BJ (cell line): ENCODE measurements at regions of chr9 and their contacts with region 1.

Region 1: DNA sequence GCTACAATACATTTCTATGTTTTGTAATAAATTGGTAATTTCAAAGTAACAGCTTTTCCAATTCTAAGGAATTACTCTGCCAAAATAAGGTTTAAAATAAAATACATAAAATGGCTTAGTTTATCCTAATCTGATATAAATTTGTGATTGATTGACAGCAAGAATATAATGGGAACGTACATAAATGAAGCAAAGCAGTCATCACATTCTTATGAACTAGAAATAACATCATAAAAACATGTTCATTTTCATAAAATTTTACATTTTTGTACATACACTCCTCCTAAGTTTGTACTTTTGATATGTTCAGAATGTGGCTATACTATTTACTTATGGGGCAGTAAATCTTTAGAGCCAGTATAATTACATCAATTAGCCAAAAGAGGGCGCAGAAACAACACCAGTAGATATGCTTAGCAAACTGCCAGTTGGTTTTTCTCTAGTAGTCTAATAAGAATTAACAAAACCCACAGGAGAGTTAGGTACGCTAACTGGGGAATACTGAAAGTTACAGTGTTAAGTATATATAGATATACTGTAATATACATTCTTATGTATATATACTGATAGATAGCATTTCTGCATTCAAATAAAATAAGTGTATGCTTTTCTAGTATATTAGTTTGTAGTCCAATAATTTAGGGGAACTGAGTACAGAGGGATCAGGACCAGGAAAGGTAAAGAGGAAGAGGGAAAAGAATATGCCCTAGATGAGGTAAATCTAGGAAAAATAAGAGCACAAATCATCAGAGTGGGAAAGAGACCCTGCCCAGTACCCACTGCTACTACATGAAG is 76.8 kb downstream of the ZDHHC21 start:
- DNase-seq: peak; percentile 5
- H3K4me3 ChIP-seq: no peak overlapping the region
- H3K27me3 ChIP-seq: no peaks in the 10 kb centered on the region
- CTCF ChIP-seq: peak; percentile 64

Region 2: GRCh38 chr9:14511452-14511851 is 104.9 kb before region 1 on chr9:
- CTCF ChIA-PET with region 1: no interaction called
- POLR2A ChIA-PET with region 1: no interaction called
- DNase-seq: no peak
- H3K4me3 ChIP-seq: no peak overlapping the region
- H3K27me3 ChIP-seq: no peaks in the 10 kb centered on the region
- CTCF ChIP-seq: no peak

Region 3: DNA sequence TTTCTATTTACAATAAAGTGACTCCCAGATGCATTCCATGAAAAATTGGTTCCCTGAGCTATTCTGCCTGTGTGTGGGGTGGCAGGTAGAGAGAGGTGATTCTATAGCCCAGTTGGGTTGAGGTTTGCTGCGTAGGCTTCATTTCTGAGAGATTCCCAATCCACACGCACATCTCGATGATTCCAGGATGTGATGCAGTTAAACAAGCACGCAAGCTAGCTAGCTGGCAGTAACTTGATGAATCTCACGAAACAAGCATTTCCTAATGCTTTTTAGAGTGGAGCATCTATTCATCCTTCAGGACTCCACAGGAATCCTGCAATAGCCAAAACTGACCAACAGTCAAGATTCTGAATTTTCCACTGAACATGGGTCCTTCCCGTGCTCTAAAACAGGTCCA is 149.9 kb after region 1 on chr9:
- CTCF ChIA-PET with region 1: interaction called, 12 read pairs
- POLR2A ChIA-PET with region 1: no interaction called
- DNase-seq: no peak
- H3K4me3 ChIP-seq: no peak overlapping the region
- H3K27me3 ChIP-seq: no peaks in the 10 kb centered on the region
- CTCF ChIP-seq: no peak